GM13976 (cell line): ENCODE measurements at regions of chr1 and their contacts with region 1.

Region 1: DNA sequence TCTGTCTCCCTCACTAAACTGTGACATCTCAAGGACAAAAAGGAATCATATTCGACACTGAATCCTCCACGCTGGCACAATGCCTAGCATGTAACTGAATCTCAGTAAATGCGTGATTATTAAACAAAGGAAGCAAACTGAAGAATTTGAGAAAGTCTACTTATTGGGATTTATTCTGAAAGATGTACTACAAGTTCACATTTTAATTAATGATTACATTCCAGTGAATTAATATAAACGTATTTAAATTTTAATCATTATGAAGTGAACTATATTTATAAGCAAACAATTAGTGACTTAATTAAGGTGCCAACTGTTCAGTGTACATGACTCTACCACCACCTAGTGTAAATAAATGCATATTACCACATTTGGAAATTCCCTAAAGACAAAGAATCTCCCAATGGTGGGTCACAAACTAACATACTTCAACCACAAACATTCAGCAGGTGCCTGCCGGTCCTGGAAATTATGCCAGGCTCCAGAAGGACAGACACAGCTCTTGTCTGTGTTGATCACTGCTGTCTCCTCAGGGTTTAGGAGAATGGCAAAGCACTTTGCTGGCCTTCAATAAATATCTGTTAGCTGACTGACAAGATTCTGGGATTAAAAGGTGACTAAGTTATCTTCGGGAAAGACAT is 56.3 kb downstream of the SMYD3 start:
- DNase-seq: peak; percentile 42
- CTCF ChIP-seq: peak; percentile 56

Region 2: DNA sequence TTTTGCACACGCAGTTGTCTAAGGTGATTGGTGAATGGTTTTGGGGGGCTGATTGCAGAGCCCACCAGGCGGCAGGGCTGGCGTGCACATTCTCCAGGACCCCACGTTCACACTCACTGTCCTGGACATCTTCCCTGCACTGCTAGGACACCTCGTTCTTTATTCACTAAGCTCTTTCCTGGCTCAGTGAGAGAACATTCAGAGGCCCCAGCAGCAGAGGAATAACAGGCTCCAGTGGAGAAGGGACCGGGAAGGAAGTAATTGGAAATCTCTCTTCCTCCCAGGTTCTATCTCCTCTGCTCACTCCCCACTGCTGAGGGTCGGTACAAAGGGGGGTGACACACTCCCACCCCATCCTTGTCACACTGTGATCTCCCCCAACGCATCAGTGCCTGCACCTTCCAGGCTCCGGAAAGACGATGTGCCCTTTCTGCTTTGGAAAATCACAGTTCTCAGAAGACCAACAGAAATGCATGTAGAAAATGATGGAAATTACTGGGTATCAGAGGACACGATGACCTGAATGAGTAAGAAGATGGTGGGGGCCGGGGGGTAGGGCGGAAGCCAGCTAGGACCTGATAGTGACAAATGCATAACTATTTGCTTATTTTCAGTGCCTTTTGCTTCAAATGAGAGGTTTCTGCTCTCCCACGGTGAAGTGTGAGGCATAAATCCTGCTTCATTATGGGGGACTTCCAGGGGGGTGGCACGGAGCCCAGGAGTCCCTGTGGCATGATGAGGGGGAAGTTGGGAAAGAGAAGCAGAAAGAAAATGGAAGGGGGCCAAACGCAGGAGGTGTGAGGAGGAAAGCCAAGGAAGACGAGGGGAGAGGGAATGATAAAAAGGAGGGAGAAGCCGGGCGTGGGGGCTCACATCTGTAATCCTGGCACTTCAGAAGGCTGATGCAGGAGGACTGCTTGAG is 1321.2 kb before region 1 on chr1:
- in situ Hi-C with region 1: loop called (anchors 25 kb)
- DNase-seq: no peak
- CTCF ChIP-seq: no peak

Region 3: DNA sequence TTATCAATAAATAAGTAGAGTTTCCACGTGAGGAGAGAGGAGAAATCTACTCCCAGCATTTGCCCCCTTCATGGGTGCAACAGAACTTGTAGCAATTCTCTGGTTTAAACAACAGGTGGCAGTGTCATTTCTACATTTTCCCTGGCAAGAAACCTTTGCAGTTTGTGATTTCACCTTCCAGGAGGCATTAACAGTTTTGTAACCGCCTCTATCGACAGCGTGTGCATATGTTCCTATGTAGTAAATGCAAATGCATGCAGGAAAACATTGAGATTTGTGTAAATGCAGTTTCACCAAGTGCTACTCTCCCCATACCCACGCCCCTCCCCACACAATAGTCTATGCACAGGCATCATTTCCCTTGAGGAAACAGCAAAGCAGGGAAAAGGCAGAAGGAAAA is 438.4 kb before region 1 on chr1:
- in situ Hi-C with region 1: loop called (anchors 10 kb)
- DNase-seq: peak; percentile 58
- CTCF ChIP-seq: peak; percentile 57